Right lobe of liver (tissue), 6 donors: ENCODE measurements at regions of chr1 and their contacts with region 1.

Region 1: GRCh38 chr1:16146279-16147155 is 9.4 kb downstream of the EPHA2 start:
- DNase-seq: peak; percentile 65 to 72 (median 67)
- ATAC-seq: peak; percentile 7 to 44 (median 14)
- H3K4me3 ChIP-seq: peak overlapping the region in 1 of 3 donors; percentile 46
- H3K27ac ChIP-seq: peak overlapping the region; percentile 74 to 93 (median 84)
- H3K4me1 ChIP-seq: peaks cover 0 to 43% (median 19%) of the 10 kb centered on the region in 4 donors
- H3K27me3 ChIP-seq: no peaks in the 10 kb centered on the region
- CTCF ChIP-seq: no peak
- POLR2A ChIP-seq: peak; percentile 19

Region 2: DNA sequence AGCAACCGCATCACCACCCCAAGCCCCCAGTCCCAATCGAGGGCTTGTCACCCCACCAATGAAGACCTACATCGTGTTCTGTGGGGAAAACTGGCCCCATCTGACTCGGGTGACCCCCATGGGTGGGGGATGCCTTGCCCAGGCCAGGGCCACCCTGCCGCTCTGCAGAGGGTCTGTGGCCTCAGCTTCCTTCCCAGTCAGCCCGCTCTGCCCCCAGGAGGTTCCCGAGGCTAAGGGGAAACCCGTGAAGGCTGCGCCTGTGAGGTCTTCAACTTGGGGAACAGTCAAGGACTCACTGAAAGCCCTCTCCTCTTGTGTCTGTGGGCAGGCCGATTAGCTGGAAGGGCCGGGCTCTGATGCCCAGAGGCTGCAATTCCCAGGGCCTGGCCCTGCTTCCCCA is 140.5 kb before region 1 on chr1:
- intact Hi-C with region 1: no loop called
- DNase-seq: no peak
- ATAC-seq: no peak
- H3K4me3 ChIP-seq: no peak overlapping the region
- H3K27ac ChIP-seq: no peak overlapping the region
- H3K4me1 ChIP-seq: no peaks in the 10 kb centered on the region
- H3K27me3 ChIP-seq: no peaks in the 10 kb centered on the region
- CTCF ChIP-seq: no peak
- POLR2A ChIP-seq: no peak

Region 3: DNA sequence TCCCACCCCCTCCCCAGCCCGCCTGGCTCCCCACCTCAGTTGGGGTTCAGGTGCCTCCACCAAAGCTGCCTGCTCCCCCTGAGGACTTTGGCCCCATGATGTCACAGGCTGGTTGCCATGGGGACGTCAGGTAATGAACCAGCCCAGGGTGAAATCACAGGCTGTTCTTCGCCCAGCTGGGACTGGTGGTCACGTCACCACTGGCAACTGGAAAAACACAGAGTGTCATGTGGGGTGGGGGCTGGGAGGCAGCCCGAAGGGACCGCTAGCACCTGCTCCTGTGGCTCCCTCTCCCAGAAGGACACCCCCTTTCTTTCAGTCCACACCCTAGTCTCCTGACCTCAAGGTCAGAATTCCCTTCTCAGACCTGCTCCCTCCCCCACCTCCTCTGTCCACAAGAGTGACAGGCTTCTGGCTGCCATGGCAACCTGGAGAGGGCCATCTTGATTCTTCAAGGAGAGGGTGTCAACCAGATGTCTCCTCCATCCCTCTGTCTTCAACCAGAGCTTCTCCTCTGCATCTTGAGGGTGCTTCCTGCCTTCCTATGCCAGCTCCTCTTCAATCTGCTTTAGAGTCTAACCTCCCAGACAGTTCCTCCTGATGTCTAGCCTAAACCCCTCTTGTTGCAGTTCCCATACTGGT is 79.3 kb before region 1 on chr1:
- intact Hi-C with region 1: loop called in 1 of 2 experiments (anchors 10 kb)
- DNase-seq: peak; percentile 82 to 92 (median 91)
- ATAC-seq: peak; percentile 52 to 74 (median 70)
- H3K4me3 ChIP-seq: no peak overlapping the region
- H3K27ac ChIP-seq: peak overlapping the region in 1 of 3 donors; percentile 56
- H3K4me1 ChIP-seq: peaks cover 0 to 24% (median 13%) of the 10 kb centered on the region in 4 donors
- H3K27me3 ChIP-seq: no peaks in the 10 kb centered on the region
- CTCF ChIP-seq: no peak
- POLR2A ChIP-seq: no peak

Region 4: GRCh38 chr1:16181887-16182719 is 35.6 kb after region 1 on chr1:
- intact Hi-C with region 1: loop called in 1 of 2 experiments (anchors 5 kb)
- DNase-seq: peak; percentile 66 to 86 (median 83)
- ATAC-seq: peak; percentile 36 to 73 (median 62)
- H3K4me3 ChIP-seq: no peak overlapping the region
- H3K27ac ChIP-seq: peak overlapping the region; percentile 79 to 95 (median 91)
- H3K4me1 ChIP-seq: peaks cover 0 to 76% (median 33%) of the 10 kb centered on the region in 4 donors
- H3K27me3 ChIP-seq: no peaks in the 10 kb centered on the region
- CTCF ChIP-seq: no peak
- POLR2A ChIP-seq: peak; percentile 59

Region 5: GRCh38 chr1:16195518-16195905 is 49.0 kb after region 1 on chr1:
- intact Hi-C with region 1: no loop called
- DNase-seq: no peak
- ATAC-seq: no peak
- H3K4me3 ChIP-seq: no peak overlapping the region
- H3K27ac ChIP-seq: no peak overlapping the region
- H3K4me1 ChIP-seq: peaks cover 0 to 8% (median 0%) of the 10 kb centered on the region in 4 donors
- H3K27me3 ChIP-seq: no peaks in the 10 kb centered on the region
- CTCF ChIP-seq: no peak
- POLR2A ChIP-seq: no peak

Region 6: DNA sequence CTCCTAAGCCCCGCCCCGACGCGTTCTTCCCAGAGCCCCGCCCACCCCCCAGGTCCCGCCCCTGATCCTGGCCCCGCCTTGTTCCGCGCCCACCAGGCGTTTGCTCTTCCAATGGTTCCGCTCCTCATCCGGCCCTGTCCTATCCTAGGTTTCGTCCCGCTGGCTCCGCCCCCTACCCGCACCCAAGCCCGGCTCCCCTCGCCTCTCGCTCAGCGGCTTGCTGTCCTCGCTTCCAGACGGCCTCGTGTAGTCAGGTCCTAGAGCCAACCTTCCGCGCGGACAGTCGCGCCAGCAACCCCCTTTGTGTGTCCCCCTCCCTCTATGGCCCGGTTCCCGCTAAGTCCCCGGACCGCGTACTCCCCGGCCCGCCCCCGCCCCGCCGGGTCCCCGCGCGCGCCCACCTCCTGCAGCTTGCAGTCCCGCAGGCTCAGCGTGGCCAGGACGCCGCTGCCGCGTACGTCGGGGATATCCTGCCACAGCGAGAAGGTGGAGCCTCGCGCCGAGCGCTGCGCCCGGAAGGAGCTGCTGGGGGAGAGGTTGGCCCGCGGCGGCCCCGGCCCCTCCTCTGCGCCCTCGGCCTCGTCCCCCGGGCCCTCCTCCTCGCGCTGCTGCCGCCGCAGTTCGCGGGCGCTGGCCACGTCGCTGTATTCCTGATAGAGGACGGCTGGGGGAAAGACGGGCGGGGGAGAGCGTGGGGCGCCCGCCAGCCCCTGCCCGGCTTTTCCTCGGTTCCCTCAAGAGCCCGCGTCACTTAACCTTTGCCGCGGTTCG is 60.2 kb after region 1 on chr1:
- intact Hi-C with region 1: no loop called
- DNase-seq: peak; percentile 97 to 98 (median 97)
- ATAC-seq: peak; percentile 93 to 95 (median 94)
- H3K4me3 ChIP-seq: peak overlapping the region; percentile 32 to 56 (median 51)
- H3K27ac ChIP-seq: peak overlapping the region; percentile 67 to 75 (median 70)
- H3K4me1 ChIP-seq: peaks cover 0 to 6% (median 2%) of the 10 kb centered on the region in 4 donors
- H3K27me3 ChIP-seq: no peaks in the 10 kb centered on the region
- CTCF ChIP-seq: no peak
- POLR2A ChIP-seq: peak; percentile 72